HEK293 (cell line): ENCODE measurements at regions of chr17 and their contacts with region 1.

Region 1: DNA sequence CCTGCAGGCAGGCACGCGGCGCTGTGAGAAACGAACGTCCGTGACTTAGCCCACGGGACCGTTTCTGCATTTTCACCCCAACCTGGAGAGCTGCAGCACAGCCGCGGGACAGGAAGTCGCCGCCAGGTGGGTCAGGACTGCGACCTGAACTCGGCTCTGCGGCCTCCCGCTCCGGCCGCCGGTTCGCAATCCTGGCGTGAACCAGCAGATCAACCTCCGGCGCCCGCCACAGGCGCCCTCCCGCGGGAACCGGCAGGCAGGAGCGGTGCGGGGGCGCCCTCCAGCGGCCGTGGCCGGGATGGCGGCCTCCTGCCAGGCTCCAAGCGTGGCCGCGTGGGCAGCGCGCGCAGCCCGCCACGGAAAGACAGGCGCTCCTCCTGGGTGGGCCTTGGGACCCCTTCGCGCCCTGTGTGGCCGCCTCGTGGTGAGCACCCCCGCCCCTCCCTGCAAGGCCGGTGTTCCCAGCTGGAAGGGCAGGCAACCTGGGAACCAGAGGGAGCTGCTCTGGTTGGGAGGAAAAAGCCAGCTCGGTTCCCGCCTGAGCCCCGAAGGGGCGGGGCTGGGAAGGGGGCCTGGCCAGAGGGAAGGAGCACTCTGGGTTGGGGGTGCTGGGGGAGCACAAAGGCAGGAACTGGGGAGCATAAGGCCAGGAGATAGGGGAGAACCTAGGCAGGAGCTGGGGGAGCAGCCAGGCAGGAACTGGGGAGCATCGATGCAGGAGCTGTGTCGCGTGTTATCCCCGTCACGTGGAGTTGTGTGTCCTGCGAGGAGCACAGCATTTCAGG is 28.2 kb downstream of the ACTG1 start:
- H3K4me3 ChIP-seq: peak overlapping the region; percentile 45
- H3K27ac ChIP-seq: peak overlapping the region; percentile 24; the same call in 1 of the 2 replicates
- H3K4me1 ChIP-seq: peaks cover 8% of the 10 kb centered on the region
- CTCF ChIP-seq: peak; percentile 93

Region 2: DNA sequence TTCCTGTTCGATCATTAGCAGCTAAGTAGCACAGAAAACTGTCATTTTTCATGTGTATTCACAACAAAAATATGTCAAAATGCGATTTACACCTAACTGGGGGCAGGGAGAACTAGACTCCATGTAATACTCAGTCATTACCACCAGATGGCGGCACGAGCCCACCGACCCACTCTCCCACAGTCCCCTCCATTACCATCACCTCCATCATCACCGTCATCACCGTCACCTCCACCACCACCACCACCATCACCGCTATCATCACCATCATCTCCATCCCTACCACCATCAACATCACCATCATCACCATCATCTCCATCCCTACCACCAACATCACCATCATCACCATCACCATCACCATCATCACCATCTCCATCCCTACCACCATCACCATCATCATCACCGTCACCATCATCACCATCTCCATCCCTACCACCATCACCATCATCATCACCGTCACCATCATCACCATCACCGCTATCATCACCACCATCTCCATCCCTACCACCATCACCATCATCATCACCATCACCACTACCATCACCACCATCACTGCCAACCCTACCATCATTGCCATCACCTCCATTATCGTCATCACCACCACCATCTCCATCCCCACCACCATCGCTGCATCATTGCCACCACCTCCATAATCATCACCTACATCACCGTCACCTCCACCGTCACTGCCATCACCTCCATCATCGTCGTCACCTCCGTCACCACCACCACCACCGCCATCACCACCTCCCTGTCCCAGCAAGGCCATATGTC is 230.8 kb before region 1 on chr17:
- CTCF ChIA-PET with region 1: interaction called, 28 read pairs
- POLR2A ChIA-PET with region 1: no interaction called
- H3K4me3 ChIP-seq: no peak overlapping the region
- H3K27ac ChIP-seq: no peak overlapping the region
- H3K4me1 ChIP-seq: peaks cover 4% of the 10 kb centered on the region; the same call in 1 of the 2 replicates
- CTCF ChIP-seq: peak; percentile 96

Region 3: DNA sequence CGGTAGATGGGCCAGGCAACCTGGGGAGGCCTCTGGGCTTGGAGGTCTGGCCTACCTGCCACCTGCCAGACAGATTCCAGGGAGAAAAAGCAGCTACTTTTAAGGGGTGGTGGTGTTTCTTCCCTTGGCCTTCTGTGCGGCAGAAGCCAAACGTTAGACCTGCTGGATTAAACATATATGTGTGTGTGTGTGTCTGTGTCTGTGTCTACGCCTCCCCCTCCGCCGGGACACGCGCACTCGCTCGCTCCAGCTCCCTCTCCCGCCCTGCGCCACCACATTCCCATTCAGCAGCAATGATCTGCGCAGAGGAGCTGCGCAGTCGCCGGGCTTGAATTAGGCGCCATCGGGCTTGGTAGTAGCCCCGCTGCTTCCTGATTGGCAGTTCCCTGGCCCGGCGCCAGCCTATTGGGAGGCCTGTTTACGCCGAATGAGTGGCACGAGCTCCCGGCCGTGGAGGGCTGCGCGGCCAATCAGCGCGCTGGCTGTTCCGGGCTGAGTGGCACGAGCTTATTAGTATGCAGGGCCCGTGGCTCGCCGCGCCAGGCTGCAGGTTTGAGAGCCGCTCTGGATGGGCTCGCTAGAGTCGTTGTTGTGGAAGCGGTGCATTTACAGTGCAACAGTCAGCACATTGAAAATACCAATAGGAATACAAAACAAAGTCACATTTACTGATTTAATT is 89.3 kb before region 1 on chr17 and contains the start of gene BAHCC1:
- CTCF ChIA-PET with region 1: interaction called, 8 read pairs
- POLR2A ChIA-PET with region 1: interaction called, 19 read pairs
- H3K4me3 ChIP-seq: peak within 1 kb of the TSS; percentile 92
- H3K27ac ChIP-seq: peak within 1 kb of the TSS; percentile 100
- H3K4me1 ChIP-seq: peaks cover 23% of the 10 kb centered on the region
- CTCF ChIP-seq: peak; percentile 32; the same call in 1 of the 2 replicates

Region 4: DNA sequence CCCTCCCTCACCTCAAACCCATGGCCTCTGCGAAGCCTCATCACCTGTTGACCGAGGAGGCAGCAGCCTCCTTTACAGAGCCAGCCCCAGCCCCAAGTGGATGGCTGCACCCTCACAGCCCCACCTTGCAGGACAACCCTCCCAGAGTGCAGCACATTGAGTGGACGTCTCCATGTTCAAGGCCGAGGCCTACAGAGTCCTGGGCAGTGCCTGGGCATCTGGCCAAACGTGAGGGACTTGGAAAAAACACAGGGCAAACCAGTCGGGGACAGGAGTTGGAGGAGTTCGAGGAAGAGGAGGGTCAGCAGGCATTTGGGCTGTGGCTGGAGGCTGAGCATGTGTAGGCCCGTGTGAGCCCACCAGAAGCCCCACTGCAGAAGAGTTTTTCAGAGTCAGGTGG is 11.4 kb before region 1 on chr17:
- CTCF ChIA-PET with region 1: interaction called, 15 read pairs
- POLR2A ChIA-PET with region 1: no interaction called
- H3K4me3 ChIP-seq: no peak overlapping the region
- H3K27ac ChIP-seq: no peak overlapping the region
- H3K4me1 ChIP-seq: no peaks in the 10 kb centered on the region
- CTCF ChIP-seq: no peak

Region 5: DNA sequence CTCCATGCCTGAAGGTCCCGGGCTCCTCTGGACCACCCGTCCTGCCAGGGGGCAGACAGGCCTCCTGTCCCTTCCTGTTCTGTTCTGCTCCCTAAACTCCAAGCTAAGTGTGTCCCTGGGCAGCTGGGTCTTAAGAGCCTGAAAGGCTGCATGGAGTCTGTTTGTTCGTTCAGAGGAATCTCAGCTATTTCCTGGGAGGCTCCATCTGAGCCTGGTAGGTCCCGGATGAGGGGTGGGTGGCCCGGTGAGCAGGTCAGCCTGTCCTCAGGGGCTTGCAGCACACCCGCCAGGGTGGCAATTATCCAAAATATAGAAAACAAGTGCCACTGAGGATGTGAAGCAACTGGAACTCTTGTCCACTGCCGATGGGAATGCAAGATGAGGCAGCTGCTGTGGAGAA is 15.7 kb after region 1 on chr17:
- CTCF ChIA-PET with region 1: interaction called, 11 read pairs
- POLR2A ChIA-PET with region 1: interaction called, 6 read pairs
- H3K4me3 ChIP-seq: no peak overlapping the region
- H3K27ac ChIP-seq: no peak overlapping the region
- H3K4me1 ChIP-seq: no peaks in the 10 kb centered on the region
- CTCF ChIP-seq: no peak

Region 6: GRCh38 chr17:81507433-81508190 is 23.2 kb after region 1 on chr17:
- CTCF ChIA-PET with region 1: interaction called, 11 read pairs
- POLR2A ChIA-PET with region 1: interaction called, 27 read pairs
- H3K4me3 ChIP-seq: no peak overlapping the region
- H3K27ac ChIP-seq: no peak overlapping the region
- H3K4me1 ChIP-seq: peaks cover 5% of the 10 kb centered on the region; the same call in 1 of the 2 replicates
- CTCF ChIP-seq: no peak

Region 7: DNA sequence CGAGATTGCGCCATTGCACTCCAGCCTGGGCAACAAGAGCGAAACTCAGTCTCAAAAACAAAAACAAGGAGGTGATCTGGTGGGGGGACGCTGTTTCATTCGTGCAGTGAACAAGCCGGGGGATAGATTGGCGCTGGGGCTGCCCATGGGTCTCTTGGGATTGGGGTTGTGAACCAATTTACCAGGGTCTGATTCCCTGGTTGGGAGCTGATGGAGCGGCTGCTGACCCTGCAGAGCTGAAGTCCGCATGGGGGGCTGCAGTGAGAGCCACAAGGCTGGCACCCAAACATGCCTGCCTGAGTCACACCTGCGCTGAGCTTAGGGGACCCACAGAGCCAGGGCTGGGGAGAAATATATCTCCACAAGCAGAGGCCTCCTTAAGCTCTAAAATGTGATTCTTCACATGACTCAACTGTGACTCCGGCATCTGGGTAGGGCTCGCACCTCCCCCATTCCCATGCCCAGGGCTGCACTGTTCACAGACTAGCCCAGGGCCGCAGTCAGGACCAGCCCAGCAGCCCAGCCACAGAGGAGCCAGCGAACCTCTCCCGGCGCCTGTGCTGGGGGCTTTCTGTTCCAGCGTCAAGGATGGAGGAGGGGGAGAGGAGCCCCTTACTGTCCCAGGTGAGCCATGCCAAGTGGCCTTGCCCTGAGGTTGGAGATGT is 157.6 kb after region 1 on chr17:
- CTCF ChIA-PET with region 1: no interaction called
- POLR2A ChIA-PET with region 1: no interaction called
- H3K4me3 ChIP-seq: no peak overlapping the region
- H3K27ac ChIP-seq: no peak overlapping the region
- H3K4me1 ChIP-seq: 0 out of 2 replicates have a peak, but pooled peaks cover 3% of the 10 kb centered on the region
- CTCF ChIP-seq: no peak